CD8-positive, alpha-beta T cell (primary cell): ENCODE measurements at regions of chr17 and their contacts with region 1.

Region 1: DNA sequence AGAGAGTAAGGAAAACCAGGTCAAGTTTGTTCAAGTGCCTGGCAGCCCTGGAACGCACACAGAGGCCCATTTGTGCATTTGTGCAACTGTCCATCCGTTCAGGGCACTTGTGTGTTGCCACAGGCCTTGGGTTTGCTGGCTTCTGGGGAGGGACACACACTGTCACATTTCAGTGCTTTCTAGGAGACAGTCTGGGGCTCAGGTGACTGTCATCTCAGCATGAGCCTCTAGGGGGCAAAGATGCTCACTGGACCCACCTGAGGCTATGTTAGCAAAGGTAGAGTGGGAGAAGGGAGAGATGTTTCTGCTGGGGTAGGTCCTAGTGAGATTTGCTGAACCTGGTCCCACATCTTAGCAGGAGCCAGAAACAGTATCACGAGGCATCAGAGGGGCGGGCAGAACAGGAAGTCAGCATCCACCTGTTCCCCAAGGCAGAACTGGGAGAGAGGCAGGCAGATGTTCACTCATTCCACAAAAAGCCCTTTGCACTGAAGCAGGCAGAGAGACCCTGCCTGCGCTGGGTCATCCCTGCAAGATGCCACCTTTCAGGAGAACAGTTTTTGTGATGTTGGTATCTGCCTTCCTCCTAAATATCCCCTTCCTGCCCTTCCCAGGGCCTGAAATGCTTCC is 48.5 kb downstream of the RAI1 start:
- DNase-seq: peak; percentile 29 to 78 (median 67)
- ATAC-seq: peak; percentile 90
- H3K4me3 ChIP-seq: no peak overlapping the region
- H3K4me3 Mint-ChIP-seq: no peak overlapping the region
- H3K27ac ChIP-seq: no peak overlapping the region
- H3K27ac Mint-ChIP-seq: peak overlapping the region; percentile 58
- H3K4me1 ChIP-seq: peaks cover 33% of the 10 kb centered on the region
- H3K4me1 Mint-ChIP-seq: peaks cover 31% of the 10 kb centered on the region
- H3K27me3 ChIP-seq: no peaks in the 10 kb centered on the region
- H3K27me3 Mint-ChIP-seq: no peaks in the 10 kb centered on the region
- CTCF ChIP-seq: peak; percentile 59

Region 2: DNA sequence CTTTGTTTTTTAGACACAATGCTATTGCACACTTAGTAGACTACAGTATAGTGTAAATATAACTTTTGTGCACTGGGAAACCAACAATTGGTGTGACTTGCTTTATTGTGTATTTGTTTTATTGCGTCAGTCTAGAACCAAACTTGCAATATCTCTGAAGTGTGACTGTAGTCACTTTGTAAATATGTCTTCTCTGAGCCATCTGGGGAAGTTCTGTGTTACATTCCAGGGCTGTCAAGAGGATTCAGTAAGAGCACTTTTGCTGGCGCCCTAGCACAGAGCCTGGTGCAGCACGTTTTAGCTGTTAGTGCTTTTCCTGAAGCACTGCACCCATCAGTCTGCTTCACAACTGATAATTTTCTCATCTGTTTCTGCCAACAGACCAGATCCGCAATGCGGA is 353.4 kb before region 1 on chr17:
- CTCF ChIA-PET with region 1: no interaction called
- POLR2A ChIA-PET with region 1: no interaction called
- intact Hi-C with region 1: no loop called
- DNase-seq: no peak
- ATAC-seq: no peak
- H3K4me3 ChIP-seq: no peak overlapping the region
- H3K4me3 Mint-ChIP-seq: no peak overlapping the region
- H3K27ac ChIP-seq: no peak overlapping the region
- H3K27ac Mint-ChIP-seq: no peak overlapping the region
- H3K4me1 ChIP-seq: no peaks in the 10 kb centered on the region
- H3K4me1 Mint-ChIP-seq: no peaks in the 10 kb centered on the region
- H3K27me3 ChIP-seq: no peaks in the 10 kb centered on the region
- H3K27me3 Mint-ChIP-seq: no peaks in the 10 kb centered on the region
- CTCF ChIP-seq: no peak

Region 3: DNA sequence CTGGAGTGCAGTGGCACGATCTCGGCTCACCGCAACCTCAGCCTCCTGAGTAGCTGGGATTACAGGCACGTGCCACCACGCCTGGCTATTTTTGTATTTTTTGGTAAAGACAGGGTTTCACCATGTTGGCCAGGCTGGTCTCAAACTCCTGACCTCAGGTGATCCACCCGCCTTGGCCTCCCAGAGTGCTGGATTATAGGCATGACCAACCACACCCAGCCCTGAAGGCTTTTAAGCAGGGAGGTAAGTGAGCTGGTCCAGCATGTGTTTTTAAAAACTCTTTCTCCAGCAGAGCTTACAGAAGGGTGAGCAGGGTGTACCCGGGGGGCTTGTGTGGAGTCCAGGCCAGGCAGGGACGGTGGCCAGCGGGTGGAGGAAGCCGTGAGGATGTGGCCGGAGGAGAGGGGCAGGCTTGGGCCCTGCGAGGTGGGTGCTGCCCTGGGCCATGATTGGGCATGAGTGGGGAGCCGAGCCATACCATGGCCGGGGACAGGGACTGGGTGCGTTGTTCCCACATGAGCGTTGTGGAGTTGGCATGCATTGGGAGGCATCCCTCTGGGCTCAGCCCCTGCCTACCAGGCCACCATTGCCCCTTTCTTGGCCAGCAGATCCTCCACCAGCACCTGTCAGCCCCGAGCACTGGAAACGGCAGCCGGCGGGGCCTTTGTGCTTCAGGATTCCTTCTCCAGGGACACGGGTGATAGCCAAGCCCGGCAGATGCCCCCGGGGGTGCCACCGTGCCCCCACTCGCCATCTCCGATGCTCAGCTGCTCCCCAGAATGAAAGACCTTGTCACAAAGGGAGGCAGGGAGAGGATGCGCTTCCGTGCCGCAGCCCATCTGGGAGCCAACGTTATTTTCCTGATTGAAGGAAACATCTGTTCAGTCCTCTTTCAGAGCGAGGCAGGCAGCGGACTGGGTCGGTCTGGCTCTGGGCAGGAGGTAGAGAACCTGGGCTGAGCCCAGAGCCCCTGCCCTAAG is 16.0 kb after region 1 on chr17:
- CTCF ChIA-PET with region 1: interaction called, 8 read pairs
- POLR2A ChIA-PET with region 1: no interaction called
- intact Hi-C with region 1: loop called (anchors 2 kb)
- DNase-seq: no peak
- ATAC-seq: no peak
- H3K4me3 ChIP-seq: no peak overlapping the region
- H3K4me3 Mint-ChIP-seq: no peak overlapping the region
- H3K27ac ChIP-seq: no peak overlapping the region
- H3K27ac Mint-ChIP-seq: no peak overlapping the region
- H3K4me1 ChIP-seq: peaks cover 31% of the 10 kb centered on the region
- H3K4me1 Mint-ChIP-seq: peaks cover 32% of the 10 kb centered on the region
- H3K27me3 ChIP-seq: no peaks in the 10 kb centered on the region
- H3K27me3 Mint-ChIP-seq: no peaks in the 10 kb centered on the region
- CTCF ChIP-seq: no peak

Region 4: GRCh38 chr17:17763136-17763535 is 33.4 kb after region 1 on chr17:
- CTCF ChIA-PET with region 1: interaction called, 10 read pairs
- POLR2A ChIA-PET with region 1: no interaction called
- intact Hi-C with region 1: no loop called
- DNase-seq: no peak
- ATAC-seq: no peak
- H3K4me3 ChIP-seq: no peak overlapping the region
- H3K4me3 Mint-ChIP-seq: no peak overlapping the region
- H3K27ac ChIP-seq: no peak overlapping the region
- H3K27ac Mint-ChIP-seq: no peak overlapping the region
- H3K4me1 ChIP-seq: peaks cover 40% of the 10 kb centered on the region
- H3K4me1 Mint-ChIP-seq: peaks cover 49% of the 10 kb centered on the region
- H3K27me3 ChIP-seq: no peaks in the 10 kb centered on the region
- H3K27me3 Mint-ChIP-seq: no peaks in the 10 kb centered on the region
- CTCF ChIP-seq: no peak

Region 5: GRCh38 chr17:17783116-17783824 is 53.5 kb after region 1 on chr17:
- CTCF ChIA-PET with region 1: interaction called, 5 read pairs
- POLR2A ChIA-PET with region 1: no interaction called
- intact Hi-C with region 1: loop called (anchors 2 to 5 kb)
- DNase-seq: peak; percentile 24 to 79 (median 65)
- ATAC-seq: peak; percentile 58
- H3K4me3 ChIP-seq: peak overlapping the region; percentile 50 to 54
- H3K4me3 Mint-ChIP-seq: peak overlapping the region; percentile 85
- H3K27ac ChIP-seq: peak overlapping the region in 1 of 2 experiments; percentile 36
- H3K27ac Mint-ChIP-seq: peak overlapping the region; percentile 41
- H3K4me1 ChIP-seq: peaks cover 30% of the 10 kb centered on the region
- H3K4me1 Mint-ChIP-seq: peaks cover 30% of the 10 kb centered on the region
- H3K27me3 ChIP-seq: peaks cover 0 to 4% of the 10 kb centered on the region in 2 experiments
- H3K27me3 Mint-ChIP-seq: no peaks in the 10 kb centered on the region
- CTCF ChIP-seq: peak; percentile 26

Region 6: GRCh38 chr17:17859909-17860765 is 130.4 kb after region 1 on chr17:
- CTCF ChIA-PET with region 1: interaction called, 4 read pairs
- POLR2A ChIA-PET with region 1: no interaction called
- intact Hi-C with region 1: loop called (anchors 1 kb)
- DNase-seq: peak; percentile 45 to 84 (median 71)
- ATAC-seq: peak; percentile 98
- H3K4me3 ChIP-seq: no peak overlapping the region
- H3K4me3 Mint-ChIP-seq: no peak overlapping the region
- H3K27ac ChIP-seq: no peak overlapping the region
- H3K27ac Mint-ChIP-seq: no peak overlapping the region
- H3K4me1 ChIP-seq: peaks cover 44% of the 10 kb centered on the region
- H3K4me1 Mint-ChIP-seq: peaks cover 38% of the 10 kb centered on the region
- H3K27me3 ChIP-seq: no peaks in the 10 kb centered on the region
- H3K27me3 Mint-ChIP-seq: no peaks in the 10 kb centered on the region
- CTCF ChIP-seq: peak; percentile 93